ENCODE measurements at regions of chr2 and their contacts with region 1.

Region 1: GRCh38 chr2:212042562-212042961 is 496.0 kb downstream of the ERBB4 start:
- DNase-seq: no peak
- H3K4me3 ChIP-seq: no peak overlapping the region
- H3K27ac ChIP-seq: no peak overlapping the region
- H3K4me1 ChIP-seq: peaks cover 0 to 3% (median 0%) of the 10 kb centered on the region in 4 experiments; a peak in 1 of 7 replicates
- H3K27me3 ChIP-seq: no peaks in the 10 kb centered on the region
- CTCF ChIP-seq: no peak
- EP300 ChIP-seq: no peak
- POLR2A ChIP-seq: no peak
- RAD21 ChIP-seq: no peak

Region 2: GRCh38 chr2:212027681-212028628 is 14.6 kb before region 1 on chr2:
- CTCF ChIA-PET with region 1: interaction called, 11 read pairs
- POLR2A ChIA-PET with region 1: no interaction called
- DNase-seq: no peak
- H3K4me3 ChIP-seq: no peak overlapping the region
- H3K27ac ChIP-seq: no peak overlapping the region
- H3K4me1 ChIP-seq: no peaks in the 10 kb centered on the region
- H3K27me3 ChIP-seq: no peaks in the 10 kb centered on the region
- CTCF ChIP-seq: no peak
- EP300 ChIP-seq: no peak
- POLR2A ChIP-seq: no peak
- RAD21 ChIP-seq: no peak